Esophagus muscularis mucosa (tissue), 4 donors: ENCODE measurements at regions of chr3 and their contacts with region 1.

Region 1: DNA sequence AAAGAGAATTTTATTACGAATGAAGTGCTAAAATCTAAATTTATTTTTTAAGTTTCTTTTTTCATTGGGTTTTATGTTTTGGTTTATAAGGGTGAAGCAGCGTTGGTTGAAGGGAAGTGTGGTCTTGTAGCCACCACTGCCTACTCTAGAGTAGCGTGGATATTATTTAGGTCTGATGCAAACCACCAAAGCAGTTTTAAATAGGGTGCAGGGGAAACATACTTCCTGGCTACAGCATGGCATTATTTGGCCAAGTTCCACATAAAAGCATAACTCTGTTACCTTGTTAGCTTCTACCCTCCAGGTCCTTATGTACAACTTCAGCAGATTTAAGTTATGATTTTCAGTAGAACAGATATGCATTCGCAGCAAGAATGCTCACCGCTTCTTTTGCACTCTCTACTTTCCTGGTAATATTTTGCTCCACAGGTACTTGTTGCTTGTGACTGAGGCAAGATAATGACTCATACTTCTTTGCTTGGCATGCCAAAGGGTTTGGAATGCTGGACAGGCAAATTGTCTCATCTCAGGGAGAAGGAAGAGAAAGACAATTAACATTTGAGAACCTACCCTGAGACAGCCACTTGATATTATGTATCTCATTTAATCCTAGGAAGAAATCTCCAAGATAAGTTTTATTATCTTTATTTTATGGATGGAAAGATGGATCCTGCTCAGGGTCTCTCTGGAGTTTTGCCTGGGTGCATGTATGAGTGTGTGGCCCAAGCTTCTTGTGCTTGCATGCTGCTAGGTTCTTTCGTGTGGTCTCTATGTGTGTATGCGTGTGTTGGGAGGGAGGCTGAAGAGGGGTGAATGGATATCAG is 5.4 kb downstream of the TGFBR2 start:
- DNase-seq: no peak
- H3K4me3 ChIP-seq: peak overlapping the region; percentile 28 to 96 (median 87)
- H3K27ac ChIP-seq: peak overlapping the region; percentile 91 to 99 (median 99)
- H3K4me1 ChIP-seq: peaks cover 71 to 89% (median 83%) of the 10 kb centered on the region in 4 donors
- H3K27me3 ChIP-seq: no peaks in the 10 kb centered on the region
- CTCF ChIP-seq: no peak
- EP300 ChIP-seq: no peak
- POLR2A ChIP-seq: no peak

Region 2: DNA sequence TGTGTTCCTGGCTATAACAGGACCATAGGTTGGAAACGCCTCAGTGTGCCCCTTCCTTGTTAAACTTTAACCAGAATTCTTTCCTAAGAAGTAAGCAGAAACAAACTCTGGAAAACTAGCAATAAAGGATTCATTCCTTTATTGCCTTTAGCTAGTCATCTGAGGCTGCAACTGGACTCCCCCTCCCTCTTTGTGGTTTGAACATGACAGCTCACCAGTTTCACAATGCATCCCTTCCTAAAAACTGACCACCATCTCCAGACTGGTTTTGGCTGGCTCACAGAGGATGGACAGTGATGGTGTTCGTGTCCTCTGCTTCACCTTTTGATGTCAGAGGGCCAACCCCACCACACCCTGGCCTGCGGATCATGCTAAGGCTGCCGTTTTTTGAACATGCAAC is 33.3 kb before region 1 on chr3:
- intact Hi-C with region 1: no loop called
- DNase-seq: no peak
- H3K4me3 ChIP-seq: no peak overlapping the region
- H3K27ac ChIP-seq: no peak overlapping the region
- H3K4me1 ChIP-seq: peaks cover 0 to 11% (median 5%) of the 10 kb centered on the region in 4 donors
- H3K27me3 ChIP-seq: no peaks in the 10 kb centered on the region
- CTCF ChIP-seq: no peak
- EP300 ChIP-seq: no peak
- POLR2A ChIP-seq: no peak

Region 3: GRCh38 chr3:30681643-30682211 is 69.9 kb after region 1 on chr3:
- intact Hi-C with region 1: loop called (anchors 5 kb)
- DNase-seq: no peak
- H3K4me3 ChIP-seq: no peak overlapping the region
- H3K27ac ChIP-seq: peak overlapping the region; percentile 57 to 75 (median 71)
- H3K4me1 ChIP-seq: peaks cover 77 to 100% (median 97%) of the 10 kb centered on the region in 4 donors
- H3K27me3 ChIP-seq: no peaks in the 10 kb centered on the region
- CTCF ChIP-seq: no peak
- EP300 ChIP-seq: no peak
- POLR2A ChIP-seq: no peak